Posterior vena cava (tissue), 2 donors: ENCODE measurements at regions of chr1 and their contacts with region 1.

Region 1: DNA sequence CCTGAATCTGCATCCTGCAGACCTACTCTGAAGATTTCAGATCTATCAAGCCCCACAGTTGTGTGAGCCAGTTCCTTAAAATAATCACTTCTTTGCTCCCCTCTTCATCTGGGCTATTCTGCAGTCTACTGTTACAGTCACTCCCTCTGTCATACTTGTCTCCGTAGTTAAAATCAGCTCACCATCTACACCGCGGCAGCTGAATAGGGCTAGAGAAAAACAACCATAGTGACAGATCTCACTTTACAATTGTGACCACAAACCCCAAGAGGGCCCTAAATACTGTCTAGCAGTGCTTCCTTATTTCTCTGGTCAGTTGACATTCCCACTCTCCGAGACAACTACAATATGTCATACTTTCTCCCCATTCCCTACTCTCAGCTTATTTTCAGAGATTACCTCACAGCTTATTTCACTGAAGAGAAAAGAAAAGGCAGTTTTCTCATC is 12.9 kb downstream of the DESI2 start:
- DNase-seq: no peak

Region 2: DNA sequence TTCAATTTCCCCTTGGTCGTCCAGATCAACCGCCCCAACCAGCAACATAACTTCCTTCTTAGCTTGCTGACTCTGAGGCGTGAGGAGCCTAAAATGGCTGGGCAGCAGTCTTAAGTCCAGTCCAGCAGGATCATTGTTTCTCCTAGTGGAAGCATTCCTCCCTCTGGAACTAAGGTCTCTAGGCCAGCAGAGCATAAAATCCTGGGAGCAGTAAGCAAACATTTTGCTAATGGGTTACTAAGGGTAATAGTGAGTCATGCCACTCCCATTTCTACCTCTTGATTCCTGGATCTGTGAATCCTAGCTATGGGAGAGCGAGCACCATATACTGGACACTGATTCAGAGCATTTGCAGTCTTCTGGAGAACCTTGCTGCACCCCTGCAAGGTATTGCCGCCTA is 274.0 kb before region 1 on chr1:
- intact Hi-C with region 1: no loop called
- DNase-seq: no peak

Region 3: GRCh38 chr1:246095443-246095842 is 1429.6 kb after region 1 on chr1:
- intact Hi-C with region 1: loop called in 1 of 2 experiments (anchors 5 kb)
- DNase-seq: no peak